ENCODE measurements at regions of chr7 and their contacts with region 1.

Region 1: GRCh38 chr7:116525913-116526861 is 1.4 kb downstream of the CAV1 start:
- DNase-seq: peak; percentile 63 to 90
- H3K4me3 ChIP-seq: peak overlapping the region; percentile 97
- H3K27ac ChIP-seq: peak overlapping the region; percentile 92
- H3K4me1 ChIP-seq: peaks cover 64% of the 10 kb centered on the region
- H3K27me3 ChIP-seq: no peaks in the 10 kb centered on the region
- CTCF ChIP-seq: peak; percentile 56

Region 2: DNA sequence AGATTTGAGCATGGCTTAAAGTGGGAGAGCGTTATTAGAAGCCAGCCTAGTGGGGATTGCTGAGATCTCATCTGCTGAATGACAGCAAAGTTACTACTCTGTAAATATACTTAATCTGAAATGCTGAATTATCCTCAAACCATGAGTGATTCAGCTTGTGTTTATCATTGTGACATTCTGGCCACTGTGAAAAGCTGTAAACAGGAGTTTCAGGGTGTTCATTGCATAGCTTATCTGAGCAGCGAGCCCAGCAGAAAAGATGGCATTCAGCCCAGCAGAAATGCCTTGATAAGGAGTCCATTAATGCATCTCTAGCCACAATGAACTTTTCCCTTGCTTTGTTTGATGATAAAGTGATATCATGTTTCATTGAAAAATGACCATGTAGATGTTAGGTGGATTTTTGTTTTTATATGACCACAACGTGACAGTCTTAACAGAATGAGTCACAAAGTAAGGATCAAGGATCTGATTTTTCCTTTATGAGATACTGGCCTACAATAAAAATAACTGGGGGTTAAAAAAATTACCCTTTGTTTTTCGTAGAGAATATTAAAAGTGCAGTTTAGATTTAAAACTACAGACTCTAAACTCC is 308.0 kb before region 1 on chr7:
- CTCF ChIA-PET with region 1: no interaction called
- POLR2A ChIA-PET with region 1: interaction called, 5 read pairs
- intact Hi-C with region 1: loop called (anchors 1 kb)
- DNase-seq: peak; percentile 88 to 99
- H3K4me3 ChIP-seq: peak overlapping the region; percentile 36; the same call in 1 of the 2 replicates
- H3K27ac ChIP-seq: peak overlapping the region; percentile 88
- H3K4me1 ChIP-seq: peaks cover 73% of the 10 kb centered on the region
- H3K27me3 ChIP-seq: no peaks in the 10 kb centered on the region
- CTCF ChIP-seq: no peak

Region 3: DNA sequence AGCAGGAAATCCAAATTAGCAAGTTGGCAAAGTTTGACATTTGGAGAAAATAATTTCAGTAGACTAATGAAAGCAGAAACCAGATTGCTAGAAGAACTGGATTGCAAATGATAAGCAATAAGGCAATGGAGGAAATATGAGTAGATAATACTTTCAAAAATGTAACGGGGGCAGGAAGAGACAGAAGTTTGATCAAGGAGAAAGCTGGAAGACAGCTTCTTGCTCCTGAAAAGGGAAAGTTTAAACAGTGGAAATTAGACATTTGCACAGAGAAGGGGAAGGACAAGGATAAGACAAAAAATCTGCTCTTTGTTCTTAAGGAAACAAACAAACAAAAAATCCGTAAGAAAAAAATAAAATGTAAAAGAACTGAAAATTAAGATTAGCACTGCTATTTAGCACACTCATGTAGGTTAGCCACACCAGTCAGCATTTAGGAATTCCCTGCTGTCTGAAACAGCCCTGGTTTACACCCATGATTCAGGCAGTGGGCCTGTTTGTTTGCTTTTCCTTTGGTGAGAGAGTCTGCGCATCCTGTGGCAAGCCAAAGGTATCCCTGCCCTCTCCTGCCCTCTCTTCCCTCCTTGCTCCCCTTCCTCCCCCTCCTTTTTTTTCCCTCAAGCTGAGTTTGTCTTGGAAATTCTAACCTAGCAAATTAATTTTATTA is 130.9 kb before region 1 on chr7:
- CTCF ChIA-PET with region 1: interaction called, 3 read pairs
- POLR2A ChIA-PET with region 1: interaction called, 8 read pairs
- intact Hi-C with region 1: loop called (anchors 1 kb)
- DNase-seq: peak; percentile 85 to 90
- H3K4me3 ChIP-seq: peak overlapping the region; percentile 37; the same call in 1 of the 2 replicates
- H3K27ac ChIP-seq: peak overlapping the region; percentile 96
- H3K4me1 ChIP-seq: peaks cover 29% of the 10 kb centered on the region
- H3K27me3 ChIP-seq: no peaks in the 10 kb centered on the region
- CTCF ChIP-seq: no peak

Region 4: DNA sequence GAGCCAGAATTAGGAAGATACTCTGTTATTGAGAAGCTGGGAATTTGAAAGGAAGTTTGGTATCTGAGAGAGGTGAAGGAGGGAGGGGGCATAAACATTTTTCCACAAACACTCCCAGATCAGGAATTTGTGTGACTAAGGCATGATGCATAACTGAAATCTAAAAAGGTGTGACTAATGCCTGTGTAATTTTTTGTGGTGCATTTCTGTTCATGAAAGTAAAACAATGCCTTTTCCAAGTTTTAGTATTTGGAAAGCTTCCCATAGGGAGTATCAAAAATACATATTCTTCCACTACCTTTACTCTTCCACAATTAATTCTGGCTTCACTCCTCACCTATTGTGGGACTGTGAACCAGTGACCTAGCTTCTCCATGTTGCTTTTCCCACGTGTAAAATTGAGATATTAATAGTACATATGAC is 83.1 kb before region 1 on chr7:
- CTCF ChIA-PET with region 1: interaction called, 7 read pairs
- POLR2A ChIA-PET with region 1: interaction called, 34 read pairs
- intact Hi-C with region 1: loop called (anchors 1 kb)
- DNase-seq: peak; percentile 46 to 95
- H3K4me3 ChIP-seq: peak overlapping the region; percentile 65; the same call in 1 of the 2 replicates
- H3K27ac ChIP-seq: peak overlapping the region; percentile 100
- H3K4me1 ChIP-seq: peaks cover 58% of the 10 kb centered on the region
- H3K27me3 ChIP-seq: no peaks in the 10 kb centered on the region
- CTCF ChIP-seq: no peak

Region 5: GRCh38 chr7:116499168-116500077 is 26.8 kb before region 1 on chr7 and contains the start of gene CAV2:
- CTCF ChIA-PET with region 1: interaction called, 5 read pairs
- POLR2A ChIA-PET with region 1: interaction called, 17 read pairs
- intact Hi-C with region 1: loop called (anchors 1 kb)
- DNase-seq: peak; percentile 88 to 95
- H3K4me3 ChIP-seq: peak within 1 kb of the TSS; percentile 89
- H3K27ac ChIP-seq: peak within 1 kb of the TSS; percentile 81
- H3K4me1 ChIP-seq: peaks cover 35% of the 10 kb centered on the region
- H3K27me3 ChIP-seq: no peaks in the 10 kb centered on the region
- CTCF ChIP-seq: no peak
- total RNA-seq, gene CAV2: 260 and 296 TPM in 2 replicates

Region 6: GRCh38 chr7:116588641-116589594 is 62.7 kb after region 1 on chr7:
- CTCF ChIA-PET with region 1: no interaction called
- POLR2A ChIA-PET with region 1: interaction called, 5 read pairs
- intact Hi-C with region 1: loop called (anchors 1 kb)
- DNase-seq: peak in 1 of 2 experiments; percentile 6
- H3K4me3 ChIP-seq: no peak overlapping the region
- H3K27ac ChIP-seq: no peak overlapping the region
- H3K4me1 ChIP-seq: peaks cover 14% of the 10 kb centered on the region
- H3K27me3 ChIP-seq: no peaks in the 10 kb centered on the region
- CTCF ChIP-seq: peak; percentile 94

Region 7: DNA sequence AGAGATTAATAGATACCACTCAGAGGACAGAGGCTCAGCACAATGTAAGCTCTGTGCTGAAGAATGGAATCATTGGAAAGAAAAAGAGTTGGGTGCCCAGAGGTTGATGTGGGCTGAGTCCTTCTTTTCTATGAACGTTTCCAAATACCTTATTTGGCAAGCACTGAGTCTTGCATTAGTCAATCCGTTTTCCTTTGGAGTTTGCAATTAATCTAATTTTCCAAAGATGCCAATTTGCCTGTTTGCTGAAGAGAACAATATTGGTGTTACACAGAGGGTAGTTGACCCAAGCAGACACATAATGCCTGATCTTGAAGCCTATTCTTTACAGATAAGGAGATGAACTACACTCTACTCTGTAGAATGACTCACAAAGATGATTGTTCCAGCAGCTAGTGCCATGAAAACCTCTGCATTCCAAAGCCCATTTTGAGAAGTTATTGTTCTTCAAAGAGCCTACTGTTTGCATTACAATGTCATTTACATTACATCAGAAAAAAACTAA is 90.4 kb after region 1 on chr7:
- CTCF ChIA-PET with region 1: no interaction called
- POLR2A ChIA-PET with region 1: no interaction called
- intact Hi-C with region 1: no loop called
- DNase-seq: peak in 1 of 2 experiments; percentile 67
- H3K4me3 ChIP-seq: no peak overlapping the region
- H3K27ac ChIP-seq: no peak overlapping the region
- H3K4me1 ChIP-seq: peaks cover 18% of the 10 kb centered on the region
- H3K27me3 ChIP-seq: no peaks in the 10 kb centered on the region
- CTCF ChIP-seq: no peak

Region 8: GRCh38 chr7:116736927-116737715 is 210.9 kb after region 1 on chr7:
- CTCF ChIA-PET with region 1: no interaction called
- POLR2A ChIA-PET with region 1: no interaction called
- intact Hi-C with region 1: no loop called
- DNase-seq: no peak
- H3K4me3 ChIP-seq: no peak overlapping the region
- H3K27ac ChIP-seq: no peak overlapping the region
- H3K4me1 ChIP-seq: no peaks in the 10 kb centered on the region
- H3K27me3 ChIP-seq: no peaks in the 10 kb centered on the region
- CTCF ChIP-seq: no peak